ENCODE measurements at regions of chr4 and their contacts with region 1.

Region 1: GRCh38 chr4:174318829-174319764 is 35.4 kb downstream of the CEP44 start:
- DNase-seq: peak; percentile 38
- ATAC-seq: no peak
- H3K4me3 ChIP-seq: no peak overlapping the region
- H3K4me3 Mint-ChIP-seq: no peak overlapping the region
- H3K27ac ChIP-seq: no peak overlapping the region
- H3K27ac Mint-ChIP-seq: no peak overlapping the region
- H3K4me1 ChIP-seq: no peaks in the 10 kb centered on the region
- H3K4me1 Mint-ChIP-seq: no peaks in the 10 kb centered on the region
- H3K27me3 ChIP-seq: no peaks in the 10 kb centered on the region
- H3K27me3 Mint-ChIP-seq: no peaks in the 10 kb centered on the region
- CTCF ChIP-seq: peak; percentile 83

Region 2: DNA sequence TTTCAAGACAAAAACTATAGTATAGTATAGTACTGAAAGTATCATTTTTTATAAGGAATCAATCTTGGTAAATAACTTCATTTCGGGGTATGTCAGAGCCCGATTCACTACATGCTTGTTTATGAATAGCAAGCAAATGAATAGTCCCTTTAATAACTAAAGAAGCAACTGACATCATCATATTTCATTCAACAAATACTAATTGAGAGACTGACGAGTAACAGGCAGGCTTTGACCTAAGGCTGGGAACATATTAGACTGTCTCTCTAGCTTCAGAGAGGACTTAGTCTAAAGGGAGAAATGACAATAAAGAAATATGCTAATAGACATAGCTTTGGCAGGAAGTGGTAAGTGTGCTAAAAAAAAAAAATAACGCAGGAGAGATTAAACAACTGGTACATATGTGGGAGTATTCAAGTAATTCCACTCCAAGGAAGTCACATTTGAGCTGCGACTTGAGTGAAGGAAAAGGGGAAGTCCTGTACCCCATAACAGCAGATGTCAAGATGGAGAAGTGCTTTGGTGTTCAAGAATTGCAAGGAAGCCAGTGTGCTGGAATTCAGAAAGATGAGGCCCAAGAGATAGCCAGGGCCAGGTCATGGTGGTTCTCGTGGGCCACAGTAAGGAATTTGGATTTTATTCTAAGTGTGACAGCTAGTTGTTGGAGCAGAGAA is 320.5 kb before region 1 on chr4:
- CTCF ChIA-PET with region 1: no interaction called
- POLR2A ChIA-PET with region 1: no interaction called
- intact Hi-C with region 1: no loop called
- DNase-seq: no peak
- ATAC-seq: no peak
- H3K4me3 ChIP-seq: no peak overlapping the region
- H3K4me3 Mint-ChIP-seq: no peak overlapping the region
- H3K27ac ChIP-seq: no peak overlapping the region
- H3K27ac Mint-ChIP-seq: no peak overlapping the region
- H3K4me1 ChIP-seq: no peaks in the 10 kb centered on the region
- H3K4me1 Mint-ChIP-seq: no peaks in the 10 kb centered on the region
- H3K27me3 ChIP-seq: no peaks in the 10 kb centered on the region
- H3K27me3 Mint-ChIP-seq: no peaks in the 10 kb centered on the region
- CTCF ChIP-seq: no peak

Region 3: GRCh38 chr4:174222266-174222872 is 96.7 kb before region 1 on chr4:
- CTCF ChIA-PET with region 1: interaction called, 15 read pairs
- POLR2A ChIA-PET with region 1: no interaction called
- intact Hi-C with region 1: loop called (anchors 1 kb)
- DNase-seq: peak; percentile 35
- ATAC-seq: no peak
- H3K4me3 ChIP-seq: no peak overlapping the region
- H3K4me3 Mint-ChIP-seq: no peak overlapping the region
- H3K27ac ChIP-seq: no peak overlapping the region
- H3K27ac Mint-ChIP-seq: no peak overlapping the region
- H3K4me1 ChIP-seq: peaks cover 5 to 13% of the 10 kb centered on the region in 2 donors
- H3K4me1 Mint-ChIP-seq: peaks cover 8% of the 10 kb centered on the region
- H3K27me3 ChIP-seq: peaks cover 0 to 41% (median 18%) of the 10 kb centered on the region in 4 experiments
- H3K27me3 Mint-ChIP-seq: peaks cover 52% of the 10 kb centered on the region
- CTCF ChIP-seq: peak; percentile 79

Region 4: GRCh38 chr4:174278467-174278866 is 40.6 kb before region 1 on chr4:
- CTCF ChIA-PET with region 1: no interaction called
- POLR2A ChIA-PET with region 1: no interaction called
- intact Hi-C with region 1: no loop called
- DNase-seq: no peak
- ATAC-seq: no peak
- H3K4me3 ChIP-seq: no peak overlapping the region
- H3K4me3 Mint-ChIP-seq: no peak overlapping the region
- H3K27ac ChIP-seq: no peak overlapping the region
- H3K27ac Mint-ChIP-seq: no peak overlapping the region
- H3K4me1 ChIP-seq: peaks cover 7 to 12% of the 10 kb centered on the region in 2 donors
- H3K4me1 Mint-ChIP-seq: peaks cover 43% of the 10 kb centered on the region
- H3K27me3 ChIP-seq: no peaks in the 10 kb centered on the region
- H3K27me3 Mint-ChIP-seq: no peaks in the 10 kb centered on the region
- CTCF ChIP-seq: no peak